GM12878 (cell line): ENCODE measurements at regions of chr9 and their contacts with region 1.

Region 1: DNA sequence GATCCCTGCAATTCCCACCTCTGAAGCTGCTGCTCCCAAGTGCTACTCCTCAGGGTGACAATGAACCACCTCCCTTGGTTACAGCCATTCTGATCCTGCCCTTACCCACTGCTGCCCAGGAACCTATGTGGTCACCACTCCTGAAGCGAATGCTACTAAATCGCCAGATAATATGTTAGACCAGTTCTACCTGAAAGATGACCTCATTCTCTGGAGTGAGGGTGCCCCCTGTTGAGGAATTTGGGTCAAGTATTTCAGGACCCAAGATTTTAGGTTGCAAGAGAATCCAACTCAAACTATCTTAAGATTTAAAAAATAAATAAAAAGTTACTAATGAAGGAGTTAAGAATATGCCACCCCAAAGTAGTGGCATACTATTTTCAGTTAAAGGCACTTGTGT is 5.8 kb upstream of the SNAPC3 start:
- DNase-seq: no peak
- ATAC-seq: peak; percentile 77
- H3K4me3 ChIP-seq: no peak overlapping the region
- H3K27ac ChIP-seq: no peak overlapping the region
- H3K4me1 ChIP-seq: peaks cover 1% of the 10 kb centered on the region; the same call in 1 of the 2 replicates
- H3K27me3 ChIP-seq: no peaks in the 10 kb centered on the region
- CTCF ChIP-seq: peak; percentile 10 to 44 (median 32); a peak in 5 of 6 replicates
- EP300 ChIP-seq: no peak
- POLR2A ChIP-seq: no peak
- RAD21 ChIP-seq: peak; percentile 79

Region 2: DNA sequence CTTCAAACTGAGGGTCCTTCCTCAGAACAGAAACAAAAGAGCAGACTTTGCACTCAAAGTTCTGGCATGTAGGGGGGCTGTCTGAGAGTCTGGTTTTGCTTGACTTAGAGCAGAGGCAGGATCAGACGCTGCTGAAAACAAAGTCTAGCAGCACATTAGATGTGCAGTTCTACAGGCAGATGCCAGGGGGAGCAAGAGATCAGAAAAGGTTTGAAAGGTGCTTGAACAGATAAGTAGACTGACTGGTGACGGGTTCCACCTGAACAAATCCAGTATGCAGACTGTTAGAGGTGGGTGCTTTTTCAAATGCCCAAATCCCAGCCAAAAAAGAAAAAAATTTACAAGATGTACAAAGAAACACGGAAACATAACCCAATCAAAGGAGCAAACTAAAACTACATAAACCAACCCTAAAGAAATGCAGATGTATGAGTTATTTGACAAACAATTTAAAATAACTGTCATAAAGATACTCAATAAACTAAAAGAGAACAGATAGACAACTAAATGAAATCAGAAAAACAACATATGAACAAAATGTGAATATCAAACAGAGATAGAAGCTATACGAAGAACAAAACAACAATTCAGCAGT is 312.0 kb before region 1 on chr9:
- CTCF ChIA-PET with region 1: interaction called, 3 read pairs
- POLR2A ChIA-PET with region 1: no interaction called
- RAD21 ChIA-PET with region 1: no interaction called
- SMC1A ChIA-PET with region 1: no interaction called
- in situ Hi-C with region 1: no loop called
- intact Hi-C with region 1: loop called (anchors 2 kb)
- DNase-seq: no peak
- ATAC-seq: peak; percentile 86
- H3K4me3 ChIP-seq: no peak overlapping the region
- H3K27ac ChIP-seq: no peak overlapping the region
- H3K4me1 ChIP-seq: no peaks in the 10 kb centered on the region
- H3K27me3 ChIP-seq: no peaks in the 10 kb centered on the region
- CTCF ChIP-seq: peak; percentile 59 to 78 (median 67)
- EP300 ChIP-seq: no peak
- POLR2A ChIP-seq: no peak
- RAD21 ChIP-seq: peak; percentile 59

Region 3: GRCh38 chr9:15211160-15211814 is 205.6 kb before region 1 on chr9:
- CTCF ChIA-PET with region 1: interaction called, 12 read pairs
- POLR2A ChIA-PET with region 1: no interaction called
- RAD21 ChIA-PET with region 1: no interaction called
- SMC1A ChIA-PET with region 1: interaction called, 3 read pairs
- in situ Hi-C with region 1: no loop called
- intact Hi-C with region 1: loop called (anchors 1 kb)
- DNase-seq: peak; percentile 30
- ATAC-seq: peak; percentile 86
- H3K4me3 ChIP-seq: no peak overlapping the region
- H3K27ac ChIP-seq: no peak overlapping the region
- H3K4me1 ChIP-seq: no peaks in the 10 kb centered on the region
- H3K27me3 ChIP-seq: no peaks in the 10 kb centered on the region
- CTCF ChIP-seq: peak; percentile 81 to 87 (median 85); a peak in 5 of 6 replicates
- EP300 ChIP-seq: no peak
- POLR2A ChIP-seq: no peak
- RAD21 ChIP-seq: peak; percentile 86

Region 4: GRCh38 chr9:15277400-15278090 is 139.3 kb before region 1 on chr9:
- CTCF ChIA-PET with region 1: interaction called, 8 read pairs
- POLR2A ChIA-PET with region 1: no interaction called
- RAD21 ChIA-PET with region 1: no interaction called
- SMC1A ChIA-PET with region 1: interaction called, 6 read pairs
- in situ Hi-C with region 1: no loop called
- intact Hi-C with region 1: loop called (anchors 1 kb)
- DNase-seq: no peak
- ATAC-seq: peak; percentile 73
- H3K4me3 ChIP-seq: no peak overlapping the region
- H3K27ac ChIP-seq: no peak overlapping the region
- H3K4me1 ChIP-seq: no peaks in the 10 kb centered on the region
- H3K27me3 ChIP-seq: no peaks in the 10 kb centered on the region
- CTCF ChIP-seq: peak; percentile 12 to 49 (median 27); a peak in 4 of 6 replicates
- EP300 ChIP-seq: no peak
- POLR2A ChIP-seq: no peak
- RAD21 ChIP-seq: peak; percentile 58